GM12878 (cell line): ENCODE measurements at regions of chr2 and their contacts with region 1.

Region 1: DNA sequence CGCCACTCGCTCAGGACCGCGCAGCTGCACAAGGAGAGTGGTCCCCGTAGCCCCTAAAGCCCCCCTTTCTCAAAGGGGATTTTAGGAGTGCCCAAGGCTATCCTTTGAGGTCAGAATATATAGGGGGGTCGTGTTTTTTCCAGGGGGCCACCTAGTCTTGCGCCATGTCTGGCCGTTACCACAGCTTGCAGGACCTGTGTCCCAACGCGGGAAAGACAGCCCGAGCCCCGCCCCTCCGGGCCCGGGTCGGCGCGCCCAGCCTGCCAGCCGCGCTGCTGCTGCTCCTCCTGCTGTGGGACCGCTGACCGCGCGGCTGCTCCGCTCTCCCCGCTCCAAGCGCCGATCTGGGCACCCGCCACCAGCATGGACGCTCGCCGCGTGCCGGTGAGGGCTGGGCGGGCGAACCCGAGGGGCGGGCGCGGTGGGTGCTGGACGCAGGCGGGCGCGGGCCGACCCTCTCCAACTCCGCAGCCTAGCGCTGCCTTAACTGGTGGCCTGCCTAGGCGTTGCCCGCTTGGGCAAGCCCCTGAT is at the start of gene CDCA7:
- DNase-seq: no peak
- ATAC-seq: peak; percentile 63
- H3K4me3 ChIP-seq: peak within 1 kb of the TSS; percentile 78
- H3K27ac ChIP-seq: peak within 1 kb of the TSS; percentile 97
- H3K4me1 ChIP-seq: peaks cover 18% of the 10 kb centered on the region
- H3K27me3 ChIP-seq: no peaks in the 10 kb centered on the region
- CTCF ChIP-seq: no peak
- EP300 ChIP-seq: no peak
- POLR2A ChIP-seq: peak; percentile 82
- RAD21 ChIP-seq: no peak
- polyA plus RNA-seq, gene CDCA7: 23.5 to 26.4 TPM

Region 2: GRCh38 chr2:173075781-173076580 is 278.7 kb before region 1 on chr2 and contains the start of gene MAP3K20:
- CTCF ChIA-PET with region 1: no interaction called
- POLR2A ChIA-PET with region 1: no interaction called
- RAD21 ChIA-PET with region 1: no interaction called
- SMC1A ChIA-PET with region 1: no interaction called
- in situ Hi-C with region 1: no loop called
- intact Hi-C with region 1: loop called (anchors 5 kb)
- DNase-seq: peak; percentile 9
- ATAC-seq: peak; percentile 76
- H3K4me3 ChIP-seq: peak within 1 kb of the TSS; percentile 79
- H3K27ac ChIP-seq: peak within 1 kb of the TSS; percentile 91
- H3K4me1 ChIP-seq: peaks cover 12% of the 10 kb centered on the region
- H3K27me3 ChIP-seq: no peaks in the 10 kb centered on the region; a peak in 2 of 4 replicates
- CTCF ChIP-seq: peak; percentile 28 to 41 (median 37); a peak in 3 of 6 replicates
- EP300 ChIP-seq: no peak
- POLR2A ChIP-seq: peak; percentile 75
- RAD21 ChIP-seq: peak; percentile 41
- polyA plus RNA-seq, gene MAP3K20: 0.84 to 1.0 TPM

Region 3: DNA sequence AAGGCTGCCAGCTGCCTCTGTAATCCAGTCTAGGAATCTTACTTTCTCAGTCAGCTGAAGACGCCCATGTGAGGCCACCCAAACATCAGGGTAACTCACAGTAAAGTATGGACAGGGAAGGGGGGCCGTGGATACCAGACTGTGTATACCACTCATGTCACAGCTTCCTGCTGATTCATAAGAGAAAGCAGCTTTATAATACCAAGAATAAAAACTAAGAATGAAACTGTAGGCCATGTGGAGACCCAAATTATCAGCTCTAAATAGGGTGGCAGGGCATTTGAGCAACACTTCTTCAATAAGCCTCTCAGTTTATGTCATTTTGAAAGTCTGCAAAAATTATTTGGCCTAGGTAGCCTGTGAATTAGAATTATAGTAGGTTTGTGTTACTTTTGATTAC is 115.0 kb before region 1 on chr2:
- CTCF ChIA-PET with region 1: no interaction called
- POLR2A ChIA-PET with region 1: no interaction called
- RAD21 ChIA-PET with region 1: no interaction called
- SMC1A ChIA-PET with region 1: no interaction called
- in situ Hi-C with region 1: no loop called
- intact Hi-C with region 1: loop called (anchors 5 kb)
- DNase-seq: peak; percentile 68
- ATAC-seq: peak; percentile 97
- H3K4me3 ChIP-seq: no peak overlapping the region
- H3K27ac ChIP-seq: no peak overlapping the region
- H3K4me1 ChIP-seq: peaks cover 9% of the 10 kb centered on the region
- H3K27me3 ChIP-seq: no peaks in the 10 kb centered on the region
- CTCF ChIP-seq: no peak
- EP300 ChIP-seq: peak; percentile 79 to 81; a peak in 3 of 4 replicates
- POLR2A ChIP-seq: no peak
- RAD21 ChIP-seq: peak; percentile 12; the same call in 1 of the 2 replicates